ENCODE measurements at regions of chr1 and their contacts with region 1.

Region 1: DNA sequence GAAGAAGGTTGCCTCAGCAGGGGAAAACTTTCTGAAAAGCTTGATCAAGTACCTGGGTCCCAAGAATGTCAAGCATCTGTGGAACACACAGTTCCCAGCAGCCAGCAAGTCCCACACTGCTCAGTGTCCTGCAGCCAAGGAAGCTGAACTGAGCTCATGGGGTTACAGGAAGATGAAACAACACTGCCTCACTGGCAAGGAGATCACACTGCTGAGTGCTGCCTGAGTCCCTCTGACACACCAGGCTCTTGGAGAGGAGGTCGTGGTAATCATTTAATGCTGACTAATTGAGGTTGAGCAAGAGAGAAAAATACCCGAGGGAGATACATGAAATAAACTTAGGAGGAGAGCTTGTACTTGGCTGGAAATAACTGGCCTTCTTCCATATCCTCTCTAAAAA is 75.2 kb downstream of the MPZL1 start:
- DNase-seq: peak; percentile 97
- H3K4me3 ChIP-seq: no peak overlapping the region
- H3K27ac ChIP-seq: peak overlapping the region; percentile 84
- H3K4me1 ChIP-seq: peaks cover 58% of the 10 kb centered on the region
- H3K27me3 ChIP-seq: no peaks in the 10 kb centered on the region
- CTCF ChIP-seq: peak in 1 of 2 donors; percentile 32

Region 2: DNA sequence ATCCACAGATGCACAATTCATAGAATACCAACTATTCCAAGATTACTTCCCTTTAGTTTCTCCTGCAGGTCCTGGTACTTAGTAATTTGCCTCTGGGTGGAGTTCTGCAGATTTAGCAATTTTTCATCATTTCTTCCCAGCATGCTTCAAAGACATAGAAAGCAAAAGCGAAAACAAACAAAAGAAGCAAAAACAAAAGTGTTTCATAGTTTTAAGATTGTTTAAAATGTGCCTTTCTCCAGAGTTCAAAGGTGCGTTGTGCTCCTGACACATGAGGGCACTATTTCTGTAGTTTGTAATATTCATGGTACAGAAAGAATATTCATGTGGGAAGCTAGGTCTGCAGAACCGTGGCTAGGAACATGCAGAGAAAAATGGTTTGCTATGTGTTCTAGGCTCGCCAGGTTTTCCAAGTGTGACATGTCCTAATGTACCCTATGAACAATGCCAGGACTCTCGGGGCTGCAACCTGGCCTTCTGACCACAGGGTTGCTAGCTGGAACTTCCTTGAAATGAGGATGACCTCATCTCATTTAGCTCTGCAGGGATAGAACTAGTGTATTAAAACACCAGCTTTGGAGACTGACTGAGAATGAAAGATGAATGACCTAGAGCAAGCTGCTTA is 196.9 kb before region 1 on chr1:
- CTCF ChIA-PET with region 1: no interaction called
- dilution Hi-C with region 1: loop called (anchors 10 kb)
- in situ Hi-C with region 1: no loop called
- intact Hi-C with region 1: no loop called
- DNase-seq: peak; percentile 63
- H3K4me3 ChIP-seq: no peak overlapping the region
- H3K27ac ChIP-seq: no peak overlapping the region
- H3K4me1 ChIP-seq: peaks cover 18% of the 10 kb centered on the region
- H3K27me3 ChIP-seq: no peaks in the 10 kb centered on the region
- CTCF ChIP-seq: peak; percentile 59 to 64

Region 3: DNA sequence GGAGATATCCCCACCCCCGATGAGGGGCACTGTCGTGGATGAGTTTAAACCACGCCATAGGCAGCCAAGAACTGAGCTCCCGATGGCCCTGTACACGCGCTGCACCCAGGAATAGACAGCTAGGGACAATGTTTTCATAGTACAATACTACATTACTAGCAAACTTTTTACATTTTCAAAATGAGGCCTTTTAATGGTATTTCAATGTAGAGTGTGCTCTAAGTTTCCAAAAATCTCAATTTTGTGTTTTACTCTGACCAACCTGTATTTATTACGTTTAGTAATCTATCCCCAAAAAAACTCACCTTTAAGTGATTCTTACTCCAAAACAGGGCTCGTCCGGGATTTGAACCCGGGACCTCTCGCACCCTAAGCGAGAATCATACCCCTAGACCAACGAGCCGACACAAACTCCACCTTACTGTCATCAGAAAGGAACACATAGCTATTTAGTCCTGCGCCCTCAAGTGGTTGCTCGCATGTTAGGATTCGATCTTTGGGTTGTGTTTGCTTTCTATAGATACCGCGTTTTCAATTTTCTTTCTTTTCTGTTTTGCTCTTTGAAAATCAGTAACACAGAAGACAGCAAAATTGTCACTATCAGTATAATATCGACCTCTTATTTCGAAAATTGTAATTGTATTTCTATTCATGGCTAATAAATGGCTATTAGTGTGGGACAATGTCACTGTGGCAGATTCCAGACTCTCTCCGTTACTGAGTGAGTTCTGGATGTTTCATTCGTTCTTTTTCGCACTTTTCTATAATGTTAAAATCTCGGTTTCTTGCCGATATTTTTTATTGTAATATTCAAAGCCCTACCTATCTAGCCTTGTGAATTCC is 81.6 kb before region 1 on chr1:
- CTCF ChIA-PET with region 1: no interaction called
- dilution Hi-C with region 1: loop called (anchors 5 kb)
- in situ Hi-C with region 1: loop called (anchors 5 kb)
- intact Hi-C with region 1: loop called (anchors 1 kb)
- DNase-seq: peak; percentile 83
- H3K4me3 ChIP-seq: peak overlapping the region; percentile 79 to 85 (median 84)
- H3K27ac ChIP-seq: peak overlapping the region; percentile 89
- H3K4me1 ChIP-seq: peaks cover 13% of the 10 kb centered on the region
- H3K27me3 ChIP-seq: no peaks in the 10 kb centered on the region
- CTCF ChIP-seq: peak; percentile 88 to 99

Region 4: GRCh38 chr1:167721617-167722151 is 75.3 kb before region 1 on chr1 and contains the start of gene MPZL1:
- CTCF ChIA-PET with region 1: no interaction called
- dilution Hi-C with region 1: loop called (anchors 5 kb)
- in situ Hi-C with region 1: loop called (anchors 5 kb)
- intact Hi-C with region 1: no loop called
- DNase-seq: peak; percentile 91
- H3K4me3 ChIP-seq: peak within 1 kb of the TSS; percentile 88 to 98 (median 94)
- H3K27ac ChIP-seq: peak within 1 kb of the TSS; percentile 66
- H3K4me1 ChIP-seq: peaks cover 42% of the 10 kb centered on the region
- H3K27me3 ChIP-seq: no peaks in the 10 kb centered on the region
- CTCF ChIP-seq: no peak
- total RNA-seq, gene MPZL1: 148 to 227 TPM

Region 5: DNA sequence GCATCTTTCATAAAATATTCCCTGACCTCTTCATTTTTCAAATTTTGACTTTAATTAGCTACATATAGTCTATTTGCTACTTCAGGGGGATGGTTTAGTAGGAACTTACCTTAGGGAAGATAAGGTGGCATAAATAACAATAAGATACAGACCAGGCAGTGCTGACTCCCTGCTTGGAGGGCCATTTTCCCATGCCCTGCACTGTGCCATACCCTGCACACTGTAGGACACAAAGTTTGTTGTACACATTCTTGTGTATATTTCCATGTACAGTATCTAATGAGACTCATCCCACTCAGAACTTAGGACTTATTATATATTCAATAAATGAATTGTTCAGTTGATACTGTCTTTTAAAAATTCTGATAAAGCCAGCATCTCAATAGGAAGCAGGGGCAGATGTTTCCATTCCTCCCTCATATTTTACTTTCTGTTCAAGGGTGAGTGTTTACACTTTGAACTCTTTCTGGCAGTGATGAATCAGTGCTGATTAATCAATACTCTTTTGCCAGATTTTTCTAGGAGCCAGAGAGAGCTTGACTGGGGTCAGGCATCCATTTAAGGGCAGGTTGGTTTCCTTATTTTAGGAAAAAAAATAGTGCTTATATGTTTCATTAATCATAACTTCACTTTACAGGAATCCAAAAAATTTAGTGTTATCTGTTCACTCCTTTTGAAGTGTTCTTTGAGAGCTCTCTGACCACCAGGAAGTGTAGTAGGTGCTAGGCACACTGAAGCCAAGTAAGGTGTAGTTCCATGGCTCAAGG is 44.6 kb before region 1 on chr1:
- CTCF ChIA-PET with region 1: no interaction called
- dilution Hi-C with region 1: no loop called
- in situ Hi-C with region 1: no loop called
- intact Hi-C with region 1: loop called (anchors 2 kb)
- DNase-seq: peak; percentile 49
- H3K4me3 ChIP-seq: no peak overlapping the region
- H3K27ac ChIP-seq: peak overlapping the region; percentile 62
- H3K4me1 ChIP-seq: peaks cover 37% of the 10 kb centered on the region
- H3K27me3 ChIP-seq: no peaks in the 10 kb centered on the region
- CTCF ChIP-seq: no peak

Region 6: GRCh38 chr1:168488138-168488537 is 691.1 kb after region 1 on chr1:
- CTCF ChIA-PET with region 1: no interaction called
- dilution Hi-C with region 1: no loop called
- in situ Hi-C with region 1: no loop called
- intact Hi-C with region 1: loop called (anchors 10 kb)
- DNase-seq: peak; percentile 89
- H3K4me3 ChIP-seq: no peak overlapping the region
- H3K27ac ChIP-seq: peak overlapping the region; percentile 81
- H3K4me1 ChIP-seq: peaks cover 36% of the 10 kb centered on the region
- H3K27me3 ChIP-seq: no peaks in the 10 kb centered on the region
- CTCF ChIP-seq: no peak